Transverse colon (tissue), 4 donors: ENCODE measurements at regions of chr9 and their contacts with region 1.

Region 1: DNA sequence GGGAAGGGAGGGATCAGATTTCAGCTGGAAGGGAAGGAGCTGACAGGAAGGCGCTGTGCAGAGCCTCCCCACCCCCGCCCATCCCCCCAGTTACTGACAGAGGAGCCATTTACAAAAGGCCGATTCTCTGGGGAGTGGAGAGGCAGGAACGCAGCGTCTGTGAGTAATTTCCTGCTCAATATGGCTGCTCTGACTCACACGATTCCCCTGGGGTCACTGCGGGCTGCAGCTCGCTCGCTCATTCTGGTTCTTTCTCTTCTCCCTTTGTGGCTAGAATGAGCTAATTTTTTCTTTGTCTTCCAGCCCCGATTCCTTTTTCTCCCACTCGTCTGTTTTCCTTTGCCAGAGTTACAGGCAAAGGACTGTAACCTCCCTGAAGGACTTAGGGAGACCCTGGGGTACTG is 28.8 kb downstream of the PTPA start:
- DNase-seq: peak; percentile 87
- H3K4me3 ChIP-seq: peak overlapping the region; percentile 11 to 46 (median 28)
- H3K27ac ChIP-seq: peak overlapping the region; percentile 99 to 100 (median 100)
- H3K4me1 ChIP-seq: peaks cover 39 to 69% (median 58%) of the 10 kb centered on the region in 4 donors
- H3K27me3 ChIP-seq: no peaks in the 10 kb centered on the region
- CTCF ChIP-seq: no peak
- EP300 ChIP-seq: peak; percentile 77
- POLR2A ChIP-seq: peak; percentile 72

Region 2: GRCh38 chr9:129177791-129178559 is 38.0 kb after region 1 on chr9 and contains the start of gene IER5L:
- in situ Hi-C with region 1: no loop called
- intact Hi-C with region 1: loop called (anchors 5 kb)
- DNase-seq: peak; percentile 96
- H3K4me3 ChIP-seq: peak within 1 kb of the TSS; percentile 58 to 93 (median 91)
- H3K27ac ChIP-seq: peak within 1 kb of the TSS; percentile 93 to 99 (median 96)
- H3K4me1 ChIP-seq: peaks cover 12 to 59% (median 48%) of the 10 kb centered on the region in 4 donors
- H3K27me3 ChIP-seq: no peaks in the 10 kb centered on the region
- CTCF ChIP-seq: peak in 1 of 5 experiments; percentile 16
- EP300 ChIP-seq: no peak
- POLR2A ChIP-seq: peak; percentile 97
- total RNA-seq, gene IER5L: 1.8 to 6.5 (median 5.2) TPM

Region 3: DNA sequence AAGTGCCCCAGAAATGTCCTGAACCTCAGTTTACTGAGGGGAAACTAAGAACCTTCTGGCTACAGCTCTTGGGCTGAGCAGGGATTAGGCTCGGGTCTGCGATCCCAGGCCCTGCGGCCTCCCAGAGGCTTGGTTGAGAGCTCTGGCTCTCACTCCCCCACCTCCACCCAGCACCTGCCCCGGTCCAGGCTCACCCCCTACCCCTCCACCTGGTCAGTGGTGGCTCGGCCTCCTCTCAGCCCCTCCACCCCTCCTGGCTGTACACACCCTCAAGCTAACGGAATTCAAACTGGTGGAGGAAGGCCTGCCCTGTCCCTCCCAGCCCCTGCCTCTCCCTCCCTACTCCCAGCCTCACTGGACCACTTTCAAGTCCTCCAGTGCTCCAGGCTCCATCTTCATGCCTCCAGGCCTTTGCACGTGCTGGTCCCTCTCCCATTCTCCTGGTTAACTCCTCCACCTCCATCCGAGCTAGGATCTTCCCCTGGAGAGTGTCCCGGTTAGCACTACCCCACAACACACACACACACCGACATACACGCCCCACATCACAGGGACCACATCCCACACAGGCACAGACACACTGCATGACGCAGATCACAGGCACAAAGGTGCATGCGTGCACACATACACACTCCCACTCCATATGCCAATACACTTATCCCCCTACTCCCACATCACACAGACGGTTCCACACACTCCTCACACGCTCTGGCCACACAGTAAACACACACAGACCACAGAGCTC is 350.0 kb after region 1 on chr9:
- in situ Hi-C with region 1: no loop called
- intact Hi-C with region 1: loop called (anchors 5 kb)
- DNase-seq: no peak
- H3K4me3 ChIP-seq: peak overlapping the region; percentile 20 to 57 (median 48)
- H3K27ac ChIP-seq: peak overlapping the region; percentile 97 to 100 (median 99)
- H3K4me1 ChIP-seq: peaks cover 38 to 75% (median 64%) of the 10 kb centered on the region in 4 donors
- H3K27me3 ChIP-seq: no peaks in the 10 kb centered on the region
- CTCF ChIP-seq: no peak
- EP300 ChIP-seq: no peak
- POLR2A ChIP-seq: peak; percentile 17

Region 4: GRCh38 chr9:129617167-129617566 is 477.2 kb after region 1 on chr9:
- in situ Hi-C with region 1: loop called (anchors 5 to 10 kb)
- intact Hi-C with region 1: no loop called
- DNase-seq: no peak
- H3K4me3 ChIP-seq: no peak overlapping the region
- H3K27ac ChIP-seq: no peak overlapping the region
- H3K4me1 ChIP-seq: peaks cover 0 to 16% (median 9%) of the 10 kb centered on the region in 4 donors
- H3K27me3 ChIP-seq: peaks cover 15% of the 10 kb centered on the region
- CTCF ChIP-seq: peak in 2 of 5 experiments; percentile 9 to 21
- EP300 ChIP-seq: no peak
- POLR2A ChIP-seq: no peak